Right ventricle myocardium inferior (tissue), 1 donor: ENCODE measurements at regions of chr9 and their contacts with region 1.

Region 1: GRCh38 chr9:92747459-92748232 is 17.0 kb downstream of the BICD2 start:
- DNase-seq: no peak
- ATAC-seq: peak; percentile 32

Region 2: GRCh38 chr9:93309889-93310425 is 562.3 kb after region 1 on chr9:
- intact Hi-C with region 1: loop called (anchors 5 kb)
- DNase-seq: no peak
- ATAC-seq: no peak